ENCODE measurements at regions of chr20 and their contacts with region 1.

Region 1: GRCh38 chr20:38113401-38114325 is 51.4 kb downstream of the TGM2 start:
- DNase-seq: no peak
- ATAC-seq: peak; percentile 78
- H3K4me3 ChIP-seq: no peak overlapping the region
- H3K27ac ChIP-seq: no peak overlapping the region
- H3K4me1 ChIP-seq: 0 out of 2 replicates have a peak, but pooled peaks cover 3% of the 10 kb centered on the region
- H3K27me3 ChIP-seq: no peaks in the 10 kb centered on the region
- CTCF ChIP-seq: peak; percentile 18 to 32 (median 25); a peak in 4 of 6 replicates
- EP300 ChIP-seq: no peak
- POLR2A ChIP-seq: no peak
- RAD21 ChIP-seq: peak; percentile 54

Region 2: GRCh38 chr20:38094373-38094891 is 19.2 kb before region 1 on chr20:
- CTCF ChIA-PET with region 1: interaction called, 55 read pairs
- POLR2A ChIA-PET with region 1: interaction called, 8 read pairs
- RAD21 ChIA-PET with region 1: interaction called, 21 read pairs
- SMC1A ChIA-PET with region 1: interaction called, 45 read pairs
- in situ Hi-C with region 1: no loop called
- intact Hi-C with region 1: no loop called
- DNase-seq: peak; percentile 73
- ATAC-seq: peak; percentile 81
- H3K4me3 ChIP-seq: no peak overlapping the region
- H3K27ac ChIP-seq: peak overlapping the region; percentile 98
- H3K4me1 ChIP-seq: peaks cover 47% of the 10 kb centered on the region
- H3K27me3 ChIP-seq: no peaks in the 10 kb centered on the region
- CTCF ChIP-seq: no peak
- EP300 ChIP-seq: peak; percentile 88 to 93
- POLR2A ChIP-seq: no peak
- RAD21 ChIP-seq: no peak

Region 3: DNA sequence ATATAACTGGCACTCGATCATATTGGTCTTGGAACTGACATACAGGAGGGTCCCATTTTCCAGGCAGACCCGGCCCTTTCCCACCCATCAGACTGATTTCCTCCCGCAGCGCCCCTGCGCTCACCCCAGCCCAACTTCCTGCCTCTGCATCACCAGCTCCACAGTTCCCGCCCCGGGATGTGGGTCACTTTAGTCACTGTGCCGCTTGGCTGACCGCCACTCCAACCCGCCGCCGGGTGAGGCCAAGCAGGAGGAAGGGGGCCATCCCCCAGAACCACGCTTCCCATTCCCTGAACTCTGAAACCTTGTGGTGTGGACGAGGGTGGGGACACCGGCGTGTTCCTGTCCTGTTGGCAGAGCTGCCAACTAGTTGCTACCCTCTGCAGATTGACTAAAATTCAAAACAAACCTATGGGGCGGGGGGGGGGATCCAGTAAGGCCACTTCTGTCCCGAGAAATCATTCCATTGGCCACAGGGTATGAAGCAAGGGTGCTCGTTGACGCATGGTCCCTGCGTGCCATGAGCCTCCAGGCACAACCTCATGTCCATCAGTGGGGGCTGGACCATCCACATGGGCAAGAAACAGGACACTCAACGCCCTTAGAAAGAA is 39.1 kb after region 1 on chr20:
- CTCF ChIA-PET with region 1: interaction called, 8 read pairs
- POLR2A ChIA-PET with region 1: no interaction called
- RAD21 ChIA-PET with region 1: interaction called, 13 read pairs
- SMC1A ChIA-PET with region 1: interaction called, 6 read pairs
- in situ Hi-C with region 1: no loop called
- intact Hi-C with region 1: no loop called
- DNase-seq: no peak
- ATAC-seq: peak; percentile 68
- H3K4me3 ChIP-seq: peak overlapping the region; percentile 17; the same call in 1 of the 2 replicates
- H3K27ac ChIP-seq: peak overlapping the region; percentile 54
- H3K4me1 ChIP-seq: peaks cover 24% of the 10 kb centered on the region
- H3K27me3 ChIP-seq: no peaks in the 10 kb centered on the region
- CTCF ChIP-seq: no peak
- EP300 ChIP-seq: no peak
- POLR2A ChIP-seq: no peak
- RAD21 ChIP-seq: no peak

Region 4: GRCh38 chr20:38165089-38165989 is 51.7 kb after region 1 on chr20 and contains the start of gene TGM2:
- CTCF ChIA-PET with region 1: interaction called, 39 read pairs
- POLR2A ChIA-PET with region 1: interaction called, 3 read pairs
- RAD21 ChIA-PET with region 1: interaction called, 5 read pairs
- SMC1A ChIA-PET with region 1: interaction called, 9 read pairs
- in situ Hi-C with region 1: no loop called
- intact Hi-C with region 1: no loop called
- DNase-seq: peak; percentile 32
- ATAC-seq: peak; percentile 97
- H3K4me3 ChIP-seq: peak within 1 kb of the TSS; percentile 25; the same call in 1 of the 2 replicates
- H3K27ac ChIP-seq: no peak within 1 kb of the TSS
- H3K4me1 ChIP-seq: peaks cover 17% of the 10 kb centered on the region
- H3K27me3 ChIP-seq: no peaks in the 10 kb centered on the region
- CTCF ChIP-seq: peak; percentile 80 to 88 (median 85)
- EP300 ChIP-seq: no peak
- POLR2A ChIP-seq: no peak
- RAD21 ChIP-seq: peak; percentile 87
- polyA plus RNA-seq, gene TGM2: 0.11 to 0.16 TPM

Region 5: GRCh38 chr20:38369389-38369788 is 255.7 kb after region 1 on chr20:
- CTCF ChIA-PET with region 1: no interaction called
- POLR2A ChIA-PET with region 1: no interaction called
- RAD21 ChIA-PET with region 1: no interaction called
- SMC1A ChIA-PET with region 1: no interaction called
- in situ Hi-C with region 1: no loop called
- intact Hi-C with region 1: no loop called
- DNase-seq: no peak
- ATAC-seq: peak; percentile 61
- H3K4me3 ChIP-seq: no peak overlapping the region
- H3K27ac ChIP-seq: no peak overlapping the region
- H3K4me1 ChIP-seq: no peaks in the 10 kb centered on the region
- H3K27me3 ChIP-seq: no peaks in the 10 kb centered on the region; a peak in 2 of 4 replicates
- CTCF ChIP-seq: no peak
- EP300 ChIP-seq: no peak
- POLR2A ChIP-seq: no peak
- RAD21 ChIP-seq: no peak